CD8-positive, alpha-beta T cell (primary cell): ENCODE measurements at regions of chr2 and their contacts with region 1.

Region 1: GRCh38 chr2:172496160-172496608 is 59.7 kb upstream of the PDK1 start:
- DNase-seq: peak in 7 of 9 experiments; percentile 30 to 78 (median 57)
- ATAC-seq: peak; percentile 94
- H3K4me3 ChIP-seq: peak overlapping the region in 1 of 2 experiments; percentile 4
- H3K4me3 Mint-ChIP-seq: peak overlapping the region; percentile 61
- H3K27ac ChIP-seq: peak overlapping the region; percentile 40 to 61
- H3K27ac Mint-ChIP-seq: peak overlapping the region; percentile 96
- H3K4me1 ChIP-seq: peaks cover 83% of the 10 kb centered on the region
- H3K4me1 Mint-ChIP-seq: peaks cover 75% of the 10 kb centered on the region
- H3K27me3 ChIP-seq: no peaks in the 10 kb centered on the region
- H3K27me3 Mint-ChIP-seq: no peaks in the 10 kb centered on the region
- CTCF ChIP-seq: no peak

Region 2: GRCh38 chr2:171365232-171365631 is 1131.0 kb before region 1 on chr2:
- CTCF ChIA-PET with region 1: no interaction called
- POLR2A ChIA-PET with region 1: no interaction called
- intact Hi-C with region 1: no loop called
- DNase-seq: no peak
- ATAC-seq: no peak
- H3K4me3 ChIP-seq: no peak overlapping the region
- H3K4me3 Mint-ChIP-seq: no peak overlapping the region
- H3K27ac ChIP-seq: no peak overlapping the region
- H3K27ac Mint-ChIP-seq: no peak overlapping the region
- H3K4me1 ChIP-seq: no peaks in the 10 kb centered on the region
- H3K4me1 Mint-ChIP-seq: no peaks in the 10 kb centered on the region
- H3K27me3 ChIP-seq: no peaks in the 10 kb centered on the region
- H3K27me3 Mint-ChIP-seq: no peaks in the 10 kb centered on the region
- CTCF ChIP-seq: no peak

Region 3: GRCh38 chr2:172484253-172484652 is 11.9 kb before region 1 on chr2:
- CTCF ChIA-PET with region 1: interaction called, 58 read pairs
- POLR2A ChIA-PET with region 1: interaction called, 7 read pairs
- intact Hi-C with region 1: loop called in 1 of 2 experiments (anchors 1 kb)
- DNase-seq: peak in 2 of 9 experiments; percentile 41 to 62
- ATAC-seq: peak; percentile 63
- H3K4me3 ChIP-seq: no peak overlapping the region
- H3K4me3 Mint-ChIP-seq: peak overlapping the region; percentile 15
- H3K27ac ChIP-seq: no peak overlapping the region
- H3K27ac Mint-ChIP-seq: peak overlapping the region; percentile 75
- H3K4me1 ChIP-seq: peaks cover 55% of the 10 kb centered on the region
- H3K4me1 Mint-ChIP-seq: peaks cover 68% of the 10 kb centered on the region
- H3K27me3 ChIP-seq: no peaks in the 10 kb centered on the region
- H3K27me3 Mint-ChIP-seq: no peaks in the 10 kb centered on the region
- CTCF ChIP-seq: peak; percentile 44

Region 4: DNA sequence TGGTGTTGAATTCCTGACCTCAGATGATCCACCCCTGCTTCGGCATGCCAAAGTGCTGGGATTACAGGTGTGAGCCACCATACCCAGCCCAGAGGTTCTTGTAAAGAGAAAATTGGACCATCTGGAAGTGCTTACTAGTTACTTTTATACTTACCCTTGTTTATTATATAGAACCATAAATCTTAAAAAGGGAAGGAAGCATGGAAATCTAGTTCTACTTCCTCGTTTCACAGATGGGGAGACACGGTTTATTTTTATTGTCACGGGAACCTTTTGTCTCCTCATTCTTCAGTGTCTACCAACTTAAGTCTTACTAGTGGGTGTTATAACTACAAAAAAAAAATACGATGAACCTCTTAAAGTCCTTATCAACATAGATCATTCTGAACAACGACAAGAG is 13.9 kb after region 1 on chr2:
- CTCF ChIA-PET with region 1: interaction called, 8 read pairs
- POLR2A ChIA-PET with region 1: interaction called, 3 read pairs
- intact Hi-C with region 1: loop called in 1 of 2 experiments (anchors 2 kb)
- DNase-seq: no peak
- ATAC-seq: no peak
- H3K4me3 ChIP-seq: no peak overlapping the region
- H3K4me3 Mint-ChIP-seq: peak overlapping the region; percentile 74
- H3K27ac ChIP-seq: peak overlapping the region in 1 of 2 experiments; percentile 23
- H3K27ac Mint-ChIP-seq: peak overlapping the region; percentile 87
- H3K4me1 ChIP-seq: peaks cover 25% of the 10 kb centered on the region
- H3K4me1 Mint-ChIP-seq: peaks cover 48% of the 10 kb centered on the region
- H3K27me3 ChIP-seq: no peaks in the 10 kb centered on the region
- H3K27me3 Mint-ChIP-seq: no peaks in the 10 kb centered on the region
- CTCF ChIP-seq: no peak

Region 5: DNA sequence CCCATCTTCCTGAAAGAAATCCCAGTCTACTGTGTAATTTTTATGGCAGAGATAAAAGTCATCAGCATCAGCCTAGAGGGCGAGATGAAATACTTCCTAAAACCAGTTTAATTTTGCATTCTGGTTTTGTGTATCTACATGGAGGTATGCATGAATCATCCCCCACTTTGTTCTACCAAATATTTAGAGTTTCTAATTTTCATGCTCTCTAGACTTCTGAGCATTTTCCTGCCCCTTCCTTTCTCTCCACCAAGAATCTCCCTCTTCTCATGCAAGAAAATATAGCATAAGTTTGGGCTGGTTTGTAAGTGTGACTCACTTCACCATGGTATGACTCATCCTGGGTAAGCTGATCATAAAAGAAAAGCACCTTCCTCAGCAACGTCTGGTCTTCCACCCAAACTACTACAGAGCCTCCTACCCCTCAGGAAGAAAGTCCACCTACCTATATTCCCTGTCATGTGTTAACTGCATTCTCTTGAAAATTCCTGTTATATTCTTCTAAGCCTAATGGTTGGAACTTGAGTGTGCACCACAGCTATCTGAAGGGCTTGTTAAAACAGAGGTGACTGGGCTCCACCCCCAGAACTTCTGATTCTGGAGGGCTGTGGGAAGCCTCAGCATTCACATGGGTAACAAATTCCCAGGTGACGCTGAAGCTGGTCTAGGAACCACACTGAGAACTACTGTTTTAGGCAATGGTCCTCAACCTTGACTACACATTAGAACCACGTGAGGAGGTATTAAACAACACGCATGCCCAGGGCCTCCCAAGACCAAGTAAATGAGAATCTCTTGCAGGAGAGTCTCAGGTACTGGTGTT is 202.1 kb after region 1 on chr2:
- CTCF ChIA-PET with region 1: interaction called, 6 read pairs
- POLR2A ChIA-PET with region 1: no interaction called
- intact Hi-C with region 1: loop called (anchors 10 kb)
- DNase-seq: peak in 1 of 9 experiments; percentile 31
- ATAC-seq: peak; percentile 34
- H3K4me3 ChIP-seq: no peak overlapping the region
- H3K4me3 Mint-ChIP-seq: no peak overlapping the region
- H3K27ac ChIP-seq: no peak overlapping the region
- H3K27ac Mint-ChIP-seq: no peak overlapping the region
- H3K4me1 ChIP-seq: peaks cover 12% of the 10 kb centered on the region
- H3K4me1 Mint-ChIP-seq: peaks cover 14% of the 10 kb centered on the region
- H3K27me3 ChIP-seq: no peaks in the 10 kb centered on the region
- H3K27me3 Mint-ChIP-seq: peaks cover 2% of the 10 kb centered on the region
- CTCF ChIP-seq: no peak

Region 6: GRCh38 chr2:172704072-172704936 is 208.1 kb after region 1 on chr2:
- CTCF ChIA-PET with region 1: no interaction called
- POLR2A ChIA-PET with region 1: no interaction called
- intact Hi-C with region 1: loop called (anchors 10 kb)
- DNase-seq: peak in 2 of 9 experiments; percentile 9 to 27
- ATAC-seq: no peak
- H3K4me3 ChIP-seq: no peak overlapping the region
- H3K4me3 Mint-ChIP-seq: no peak overlapping the region
- H3K27ac ChIP-seq: no peak overlapping the region
- H3K27ac Mint-ChIP-seq: no peak overlapping the region
- H3K4me1 ChIP-seq: no peaks in the 10 kb centered on the region
- H3K4me1 Mint-ChIP-seq: peaks cover 4% of the 10 kb centered on the region
- H3K27me3 ChIP-seq: no peaks in the 10 kb centered on the region
- H3K27me3 Mint-ChIP-seq: peaks cover 5% of the 10 kb centered on the region
- CTCF ChIP-seq: no peak